CD8-positive, alpha-beta T cell (primary cell): ENCODE measurements at regions of chr6 and their contacts with region 1.

Region 1: GRCh38 chr6:135183532-135184440 is 2.7 kb downstream of the MYB start:
- DNase-seq: peak; percentile 54 to 87 (median 75)
- ATAC-seq: peak; percentile 37
- H3K4me3 ChIP-seq: peak overlapping the region; percentile 52 to 58
- H3K4me3 Mint-ChIP-seq: peak overlapping the region; percentile 91
- H3K27ac ChIP-seq: peak overlapping the region in 1 of 2 experiments; percentile 41
- H3K27ac Mint-ChIP-seq: peak overlapping the region; percentile 84
- H3K4me1 ChIP-seq: peaks cover 9% of the 10 kb centered on the region
- H3K4me1 Mint-ChIP-seq: peaks cover 23% of the 10 kb centered on the region
- H3K27me3 ChIP-seq: no peaks in the 10 kb centered on the region
- H3K27me3 Mint-ChIP-seq: no peaks in the 10 kb centered on the region
- CTCF ChIP-seq: peak; percentile 70

Region 2: DNA sequence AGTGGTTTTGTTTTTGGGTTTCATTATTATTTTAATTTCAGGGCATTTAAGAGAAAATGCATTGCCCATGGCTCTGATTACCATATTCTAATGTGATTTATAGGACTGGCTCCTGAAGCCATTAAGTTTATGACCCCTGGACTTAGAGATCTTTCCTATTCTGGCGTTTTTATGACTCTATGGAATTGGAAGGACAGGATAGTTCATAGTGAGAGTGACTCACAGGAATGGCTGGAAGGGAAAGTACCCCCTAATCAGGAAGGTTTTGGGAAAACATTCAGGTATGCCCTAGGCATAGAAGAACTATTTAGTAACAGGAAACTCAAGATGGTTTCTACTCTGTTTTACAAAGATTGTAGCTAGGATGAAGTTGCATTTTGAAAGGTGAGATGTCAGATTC is 1022.8 kb before region 1 on chr6:
- CTCF ChIA-PET with region 1: no interaction called
- POLR2A ChIA-PET with region 1: no interaction called
- intact Hi-C with region 1: loop called in 1 of 2 experiments (anchors 5 kb)
- DNase-seq: no peak
- ATAC-seq: no peak
- H3K4me3 ChIP-seq: no peak overlapping the region
- H3K4me3 Mint-ChIP-seq: no peak overlapping the region
- H3K27ac ChIP-seq: no peak overlapping the region
- H3K27ac Mint-ChIP-seq: no peak overlapping the region
- H3K4me1 ChIP-seq: no peaks in the 10 kb centered on the region
- H3K4me1 Mint-ChIP-seq: no peaks in the 10 kb centered on the region
- H3K27me3 ChIP-seq: no peaks in the 10 kb centered on the region
- H3K27me3 Mint-ChIP-seq: no peaks in the 10 kb centered on the region
- CTCF ChIP-seq: no peak

Region 3: GRCh38 chr6:135054569-135055498 is 129.0 kb before region 1 on chr6 and contains the start of gene HBS1L:
- CTCF ChIA-PET with region 1: interaction called, 15 read pairs
- POLR2A ChIA-PET with region 1: interaction called, 9 read pairs
- intact Hi-C with region 1: loop called (anchors 1 to 2 kb)
- DNase-seq: peak; percentile 91 to 100 (median 96)
- ATAC-seq: peak; percentile 96
- H3K4me3 ChIP-seq: peak within 1 kb of the TSS; percentile 76 to 88
- H3K4me3 Mint-ChIP-seq: peak within 1 kb of the TSS; percentile 98
- H3K27ac ChIP-seq: peak within 1 kb of the TSS; percentile 87 to 90
- H3K27ac Mint-ChIP-seq: peak within 1 kb of the TSS; percentile 99
- H3K4me1 ChIP-seq: peaks cover 25% of the 10 kb centered on the region
- H3K4me1 Mint-ChIP-seq: peaks cover 42% of the 10 kb centered on the region
- H3K27me3 ChIP-seq: no peaks in the 10 kb centered on the region
- H3K27me3 Mint-ChIP-seq: no peaks in the 10 kb centered on the region
- CTCF ChIP-seq: no peak
- total RNA-seq, gene HBS1L: 119 to 123 TPM

Region 4: GRCh38 chr6:135105710-135106109 is 78.1 kb before region 1 on chr6:
- CTCF ChIA-PET with region 1: interaction called, 6 read pairs
- POLR2A ChIA-PET with region 1: interaction called, 25 read pairs
- intact Hi-C with region 1: no loop called
- DNase-seq: no peak
- ATAC-seq: no peak
- H3K4me3 ChIP-seq: no peak overlapping the region
- H3K4me3 Mint-ChIP-seq: no peak overlapping the region
- H3K27ac ChIP-seq: no peak overlapping the region
- H3K27ac Mint-ChIP-seq: peak overlapping the region; percentile 86
- H3K4me1 ChIP-seq: peaks cover 39% of the 10 kb centered on the region
- H3K4me1 Mint-ChIP-seq: peaks cover 64% of the 10 kb centered on the region
- H3K27me3 ChIP-seq: no peaks in the 10 kb centered on the region
- H3K27me3 Mint-ChIP-seq: no peaks in the 10 kb centered on the region
- CTCF ChIP-seq: no peak

Region 5: GRCh38 chr6:135170849-135171248 is 12.9 kb before region 1 on chr6:
- CTCF ChIA-PET with region 1: interaction called, 10 read pairs
- POLR2A ChIA-PET with region 1: interaction called, 4 read pairs
- intact Hi-C with region 1: loop called in 1 of 2 experiments (anchors 1 kb)
- DNase-seq: no peak
- ATAC-seq: no peak
- H3K4me3 ChIP-seq: no peak overlapping the region
- H3K4me3 Mint-ChIP-seq: no peak overlapping the region
- H3K27ac ChIP-seq: no peak overlapping the region
- H3K27ac Mint-ChIP-seq: no peak overlapping the region
- H3K4me1 ChIP-seq: no peaks in the 10 kb centered on the region
- H3K4me1 Mint-ChIP-seq: no peaks in the 10 kb centered on the region
- H3K27me3 ChIP-seq: no peaks in the 10 kb centered on the region
- H3K27me3 Mint-ChIP-seq: no peaks in the 10 kb centered on the region
- CTCF ChIP-seq: no peak

Region 6: GRCh38 chr6:136289579-136290409 is 1106.0 kb after region 1 on chr6 and contains the start of gene BCLAF1:
- CTCF ChIA-PET with region 1: no interaction called
- POLR2A ChIA-PET with region 1: interaction called, 5 read pairs
- intact Hi-C with region 1: loop called in 1 of 2 experiments (anchors 10 kb)
- DNase-seq: peak; percentile 98 to 100 (median 99)
- ATAC-seq: peak; percentile 75
- H3K4me3 ChIP-seq: peak within 1 kb of the TSS; percentile 87 to 92
- H3K4me3 Mint-ChIP-seq: peak within 1 kb of the TSS; percentile 97
- H3K27ac ChIP-seq: peak within 1 kb of the TSS; percentile 98 to 100
- H3K27ac Mint-ChIP-seq: peak within 1 kb of the TSS; percentile 100
- H3K4me1 ChIP-seq: peaks cover 44% of the 10 kb centered on the region
- H3K4me1 Mint-ChIP-seq: peaks cover 44% of the 10 kb centered on the region
- H3K27me3 ChIP-seq: no peaks in the 10 kb centered on the region
- H3K27me3 Mint-ChIP-seq: no peaks in the 10 kb centered on the region
- CTCF ChIP-seq: no peak
- total RNA-seq, gene BCLAF1: 471 to 494 TPM